Activated naive CD4-positive, alpha-beta T cell treated with anti-CD3 and anti-CD28 coated beads, Interleukin-2, amount 10 ng/mL, durations not matched to agents 7 days and 5 days (primary cell): ENCODE measurements at regions of chr15 and their contacts with region 1.

Region 1: GRCh38 chr15:74036271-74037170 is 42.0 kb downstream of the PML start:
- DNase-seq: no peak
- H3K4me3 Mint-ChIP-seq: no peak overlapping the region
- H3K27ac Mint-ChIP-seq: no peak overlapping the region
- H3K4me1 Mint-ChIP-seq: no peaks in the 10 kb centered on the region
- H3K27me3 Mint-ChIP-seq: no peaks in the 10 kb centered on the region

Region 2: GRCh38 chr15:73964736-73965093 is 71.8 kb before region 1 on chr15:
- CTCF ChIA-PET with region 1: no interaction called
- DNase-seq: peak; percentile 92
- H3K4me3 Mint-ChIP-seq: peak overlapping the region; percentile 35
- H3K27ac Mint-ChIP-seq: peak overlapping the region; percentile 74
- H3K4me1 Mint-ChIP-seq: peaks cover 44% of the 10 kb centered on the region
- H3K27me3 Mint-ChIP-seq: peaks cover 5% of the 10 kb centered on the region

Region 3: GRCh38 chr15:74053941-74054529 is 17.5 kb after region 1 on chr15:
- CTCF ChIA-PET with region 1: interaction called, 10 read pairs
- DNase-seq: peak; percentile 83
- H3K4me3 Mint-ChIP-seq: no peak overlapping the region
- H3K27ac Mint-ChIP-seq: no peak overlapping the region
- H3K4me1 Mint-ChIP-seq: peaks cover 15% of the 10 kb centered on the region
- H3K27me3 Mint-ChIP-seq: peaks cover 4% of the 10 kb centered on the region